ENCODE measurements at regions of chr14 and their contacts with region 1.

Region 1: GRCh38 chr14:94691660-94692034 is 78.3 kb downstream of the GSC start:
- DNase-seq: no peak
- ATAC-seq: no peak
- H3K4me3 ChIP-seq: no peak overlapping the region
- H3K27ac ChIP-seq: no peak overlapping the region
- H3K4me1 ChIP-seq: peaks cover 6% of the 10 kb centered on the region
- H3K27me3 ChIP-seq: no peaks in the 10 kb centered on the region
- CTCF ChIP-seq: no peak
- POLR2A ChIP-seq: no peak

Region 2: DNA sequence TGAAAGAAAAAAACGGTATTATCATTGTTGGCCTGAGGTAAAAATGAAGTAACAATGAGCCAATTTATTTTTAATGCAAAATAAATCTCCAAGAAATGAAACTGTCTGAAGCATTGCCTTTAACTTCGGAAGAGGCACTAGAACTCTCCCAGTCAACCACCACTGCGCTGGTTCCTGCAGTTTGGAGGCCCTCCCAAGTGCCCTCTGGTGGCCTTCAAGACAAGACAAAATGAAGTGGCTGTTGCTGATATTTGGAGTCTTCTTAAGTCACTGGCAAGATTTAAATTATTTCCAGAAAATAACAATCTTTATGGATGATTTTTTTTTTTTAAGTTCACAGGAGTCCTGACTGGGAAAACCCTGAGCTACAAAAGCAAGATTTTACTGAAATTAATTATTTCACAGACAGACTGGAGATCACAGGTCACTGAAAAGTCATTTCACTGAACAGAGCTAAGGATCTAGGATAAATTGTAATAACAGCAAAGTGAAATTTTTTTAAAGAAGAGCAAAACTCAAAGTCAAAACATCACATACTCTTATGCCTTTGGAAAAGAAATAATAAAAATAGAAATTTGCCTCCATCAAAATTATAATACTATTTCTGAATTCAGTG is 407.4 kb after region 1 on chr14:
- intact Hi-C with region 1: loop called (anchors 10 kb)
- DNase-seq: peak; percentile 50 to 68 (median 58)
- ATAC-seq: peak; percentile 52
- H3K4me3 ChIP-seq: no peak overlapping the region
- H3K27ac ChIP-seq: no peak overlapping the region
- H3K4me1 ChIP-seq: peaks cover 8% of the 10 kb centered on the region
- H3K27me3 ChIP-seq: no peaks in the 10 kb centered on the region
- CTCF ChIP-seq: peak; percentile 39 to 63 (median 54)
- POLR2A ChIP-seq: no peak

Region 3: DNA sequence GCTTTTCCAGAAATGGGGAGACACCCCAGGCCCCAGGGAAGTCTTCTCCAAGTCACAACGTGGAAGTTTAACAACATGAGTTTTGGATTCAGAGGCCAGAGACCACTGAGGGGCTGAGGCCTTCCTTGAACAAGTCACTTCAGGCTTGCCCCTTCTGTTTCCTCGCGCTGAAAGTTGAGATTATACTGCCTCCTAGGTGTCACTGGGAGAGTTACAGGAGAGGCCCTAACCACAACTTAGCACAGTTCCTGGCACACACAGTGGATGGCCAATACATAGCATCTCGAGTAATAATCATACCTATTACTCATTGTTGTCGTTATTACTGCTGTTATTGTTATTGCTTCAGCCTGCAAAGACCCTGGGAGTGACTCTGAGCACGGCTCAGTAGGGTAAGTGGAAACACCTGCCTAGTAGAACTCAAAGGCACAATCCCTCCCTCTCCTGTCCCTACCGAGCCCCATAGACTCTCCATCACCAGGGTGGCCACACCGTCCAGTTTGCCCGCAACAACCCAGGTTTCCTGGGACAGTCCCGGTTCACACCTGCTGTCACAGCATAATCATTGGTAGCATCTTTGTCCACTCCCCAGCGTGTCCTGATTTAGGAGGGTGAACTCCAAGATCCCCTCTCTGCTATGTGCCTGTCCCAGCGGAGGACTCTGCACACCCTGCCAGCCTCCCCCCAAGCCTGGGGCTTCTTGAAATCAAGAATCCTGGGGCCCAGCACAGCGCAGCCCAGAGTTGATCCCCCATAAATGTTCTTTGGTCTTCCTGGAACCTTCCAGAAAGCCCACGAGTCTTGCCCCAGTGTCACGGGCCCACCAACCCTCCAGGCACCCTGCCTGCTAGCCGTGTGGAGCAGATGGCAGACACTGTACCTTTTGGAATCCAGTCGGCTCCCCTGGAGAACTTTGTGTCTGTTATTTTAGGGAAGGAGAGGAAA is 739.8 kb after region 1 on chr14:
- intact Hi-C with region 1: loop called (anchors 10 kb)
- DNase-seq: peak in 3 of 4 donors; percentile 18 to 22 (median 22)
- ATAC-seq: peak; percentile 71
- H3K4me3 ChIP-seq: no peak overlapping the region
- H3K27ac ChIP-seq: peak overlapping the region in 2 of 4 donors; percentile 28 to 42
- H3K4me1 ChIP-seq: peaks cover 5% of the 10 kb centered on the region
- H3K27me3 ChIP-seq: no peaks in the 10 kb centered on the region
- CTCF ChIP-seq: peak; percentile 18 to 59 (median 42)
- POLR2A ChIP-seq: no peak